MCF 10A (cell line): ENCODE measurements at regions of chr6 and their contacts with region 1.

Region 1: DNA sequence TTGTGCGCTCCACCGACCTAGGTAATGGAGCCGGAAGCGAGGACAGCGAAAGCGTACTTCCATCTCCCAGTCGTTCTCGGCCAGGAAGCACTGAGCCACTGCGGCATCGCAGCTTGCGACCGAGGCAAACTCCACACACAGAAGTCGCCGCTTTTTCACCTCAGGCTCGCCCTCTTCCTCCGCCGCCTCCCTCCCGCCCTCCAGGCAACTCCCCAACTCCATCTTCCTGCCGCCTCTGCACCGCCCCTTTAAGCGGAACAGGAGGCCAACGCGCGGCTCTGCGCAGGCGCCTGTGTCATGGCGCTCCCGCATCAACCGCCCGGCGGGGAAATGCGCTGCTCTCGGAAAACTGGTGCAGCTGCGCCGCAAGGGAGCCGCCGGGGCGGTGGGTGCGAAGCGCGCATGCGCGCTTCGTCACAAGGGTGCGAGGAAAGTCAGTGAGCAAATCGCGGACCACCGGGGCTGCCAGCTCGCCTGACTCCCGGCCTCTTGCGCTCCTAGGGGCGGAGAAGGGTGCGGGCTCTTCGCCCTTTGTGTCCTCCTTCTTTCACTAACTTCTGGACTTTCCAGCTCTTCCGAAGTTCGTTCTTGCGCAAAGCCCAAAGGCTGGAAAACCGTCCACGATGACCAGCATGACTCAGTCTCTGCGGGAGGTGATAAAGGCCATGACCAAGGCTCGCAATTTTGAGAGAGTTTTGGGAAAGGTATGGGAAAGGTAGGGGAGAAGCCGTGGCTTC is at the starts of genes ACOT13 and TDP2:
- DNase-seq: peak; percentile 97
- H3K4me3 Mint-ChIP-seq: peak within 1 kb of the TSS; percentile 94
- H3K27ac Mint-ChIP-seq: peak within 1 kb of the TSS; percentile 96
- H3K4me1 Mint-ChIP-seq: peaks cover 15% of the 10 kb centered on the region
- H3K27me3 Mint-ChIP-seq: no peaks in the 10 kb centered on the region
- CTCF ChIP-seq: peak; percentile 43
- total RNA-seq, gene ACOT13: 29.4 and 31.4 TPM in 2 replicates
- total RNA-seq, gene TDP2: 27.6 and 28.2 TPM in 2 replicates

Region 2: DNA sequence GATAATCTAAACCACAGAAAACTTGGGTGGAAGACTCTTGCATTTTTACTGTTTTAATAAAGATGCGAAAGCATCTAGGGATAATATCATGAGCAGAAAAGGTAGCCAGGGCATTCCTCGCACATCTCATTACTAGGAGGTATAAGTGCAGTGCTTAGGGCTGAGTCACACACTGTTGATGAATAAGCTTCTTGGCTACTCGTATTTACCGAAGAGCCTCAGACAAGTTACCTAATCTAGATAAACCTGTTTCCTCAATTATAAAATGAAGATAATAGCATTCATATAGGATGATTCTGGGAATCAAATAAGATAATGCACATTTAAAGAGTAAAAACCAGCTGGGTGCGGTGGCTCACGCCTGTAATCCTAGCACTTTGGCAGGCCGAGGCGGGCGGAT is 20.0 kb before region 1 on chr6:
- CTCF ChIA-PET with region 1: no interaction called
- POLR2A ChIA-PET with region 1: interaction called, 26 read pairs
- intact Hi-C with region 1: no loop called
- DNase-seq: peak; percentile 44
- H3K4me3 Mint-ChIP-seq: peak overlapping the region; percentile 74
- H3K27ac Mint-ChIP-seq: no peak overlapping the region
- H3K4me1 Mint-ChIP-seq: peaks cover 18% of the 10 kb centered on the region
- H3K27me3 Mint-ChIP-seq: peaks cover 10% of the 10 kb centered on the region
- CTCF ChIP-seq: no peak

Region 3: GRCh38 chr6:24655215-24655614 is 11.6 kb before region 1 on chr6:
- CTCF ChIA-PET with region 1: interaction called, 4 read pairs
- POLR2A ChIA-PET with region 1: interaction called, 22 read pairs
- intact Hi-C with region 1: no loop called
- DNase-seq: no peak
- H3K4me3 Mint-ChIP-seq: no peak overlapping the region
- H3K27ac Mint-ChIP-seq: no peak overlapping the region
- H3K4me1 Mint-ChIP-seq: peaks cover 10% of the 10 kb centered on the region
- H3K27me3 Mint-ChIP-seq: no peaks in the 10 kb centered on the region
- CTCF ChIP-seq: no peak

Region 4: GRCh38 chr6:24683297-24684296 is 16.8 kb after region 1 on chr6:
- CTCF ChIA-PET with region 1: no interaction called
- POLR2A ChIA-PET with region 1: no interaction called
- intact Hi-C with region 1: no loop called
- DNase-seq: no peak
- H3K4me3 Mint-ChIP-seq: no peak overlapping the region
- H3K27ac Mint-ChIP-seq: no peak overlapping the region
- H3K4me1 Mint-ChIP-seq: no peaks in the 10 kb centered on the region
- H3K27me3 Mint-ChIP-seq: no peaks in the 10 kb centered on the region
- CTCF ChIP-seq: no peak